Activated CD4-positive, alpha-beta T cell treated with anti-CD3 and anti-CD28 coated beads for 36 hours (primary cell): ENCODE measurements at regions of chr7 and their contacts with region 1.

Region 1: GRCh38 chr7:28853834-28854749 is 104.0 kb downstream of the TRIL start:
- DNase-seq: peak; percentile 85
- ATAC-seq: peak; percentile 99
- H3K4me3 Mint-ChIP-seq: peak overlapping the region; percentile 59
- H3K27ac Mint-ChIP-seq: no peak overlapping the region
- H3K4me1 Mint-ChIP-seq: peaks cover 5% of the 10 kb centered on the region
- H3K27me3 Mint-ChIP-seq: peaks cover 50% of the 10 kb centered on the region

Region 2: DNA sequence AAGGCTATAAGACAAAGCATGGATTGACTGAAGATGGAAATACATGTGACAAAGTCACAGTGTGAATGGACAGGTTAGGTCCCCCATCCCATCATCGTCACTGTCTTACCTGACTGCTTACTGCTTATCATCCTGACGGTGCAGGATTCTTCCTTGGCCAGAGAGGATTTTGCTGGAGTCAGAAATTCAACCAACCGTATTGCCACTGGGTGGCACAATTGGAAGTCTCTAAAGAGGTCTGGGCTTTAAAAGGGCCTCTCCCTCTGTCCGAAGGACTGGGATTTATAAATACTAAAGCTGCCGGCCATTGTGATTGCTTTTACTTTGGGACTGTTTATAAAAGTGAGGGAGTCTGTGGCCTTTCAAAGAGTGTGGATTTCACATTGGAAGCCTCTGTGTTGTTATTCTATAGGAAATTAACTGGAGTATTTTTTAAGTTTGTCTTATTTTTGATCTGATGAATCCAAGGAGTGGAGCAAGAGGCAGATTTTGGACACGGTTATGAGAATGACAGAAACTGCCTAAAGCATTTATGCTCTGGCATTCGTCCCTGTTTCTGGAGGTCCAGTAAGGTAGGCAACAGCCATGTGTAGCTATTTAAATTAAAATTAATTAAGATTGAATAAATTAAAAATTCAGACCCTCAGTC is 555.1 kb before region 1 on chr7:
- CTCF ChIA-PET with region 1: no interaction called
- POLR2A ChIA-PET with region 1: no interaction called
- intact Hi-C with region 1: loop called (anchors 1 to 5 kb)
- DNase-seq: peak; percentile 19
- ATAC-seq: no peak
- H3K4me3 Mint-ChIP-seq: no peak overlapping the region
- H3K27ac Mint-ChIP-seq: no peak overlapping the region
- H3K4me1 Mint-ChIP-seq: peaks cover 2% of the 10 kb centered on the region
- H3K27me3 Mint-ChIP-seq: peaks cover 14% of the 10 kb centered on the region

Region 3: GRCh38 chr7:28458732-28459131 is 395.4 kb before region 1 on chr7:
- CTCF ChIA-PET with region 1: no interaction called
- POLR2A ChIA-PET with region 1: no interaction called
- intact Hi-C with region 1: no loop called
- DNase-seq: no peak
- ATAC-seq: no peak
- H3K4me3 Mint-ChIP-seq: no peak overlapping the region
- H3K27ac Mint-ChIP-seq: no peak overlapping the region
- H3K4me1 Mint-ChIP-seq: no peaks in the 10 kb centered on the region
- H3K27me3 Mint-ChIP-seq: peaks cover 8% of the 10 kb centered on the region

Region 4: GRCh38 chr7:28564755-28565374 is 289.2 kb before region 1 on chr7:
- CTCF ChIA-PET with region 1: no interaction called
- POLR2A ChIA-PET with region 1: no interaction called
- intact Hi-C with region 1: no loop called
- DNase-seq: no peak
- ATAC-seq: no peak
- H3K4me3 Mint-ChIP-seq: no peak overlapping the region
- H3K27ac Mint-ChIP-seq: no peak overlapping the region
- H3K4me1 Mint-ChIP-seq: no peaks in the 10 kb centered on the region
- H3K27me3 Mint-ChIP-seq: peaks cover 6% of the 10 kb centered on the region

Region 5: GRCh38 chr7:28626624-28627262 is 227.3 kb before region 1 on chr7:
- CTCF ChIA-PET with region 1: no interaction called
- POLR2A ChIA-PET with region 1: no interaction called
- intact Hi-C with region 1: loop called in 1 of 2 experiments (anchors 10 kb)
- DNase-seq: peak; percentile 41
- ATAC-seq: no peak
- H3K4me3 Mint-ChIP-seq: no peak overlapping the region
- H3K27ac Mint-ChIP-seq: no peak overlapping the region
- H3K4me1 Mint-ChIP-seq: no peaks in the 10 kb centered on the region
- H3K27me3 Mint-ChIP-seq: peaks cover 10% of the 10 kb centered on the region